ENCODE measurements at regions of chr18 and their contacts with region 1.

Region 1: DNA sequence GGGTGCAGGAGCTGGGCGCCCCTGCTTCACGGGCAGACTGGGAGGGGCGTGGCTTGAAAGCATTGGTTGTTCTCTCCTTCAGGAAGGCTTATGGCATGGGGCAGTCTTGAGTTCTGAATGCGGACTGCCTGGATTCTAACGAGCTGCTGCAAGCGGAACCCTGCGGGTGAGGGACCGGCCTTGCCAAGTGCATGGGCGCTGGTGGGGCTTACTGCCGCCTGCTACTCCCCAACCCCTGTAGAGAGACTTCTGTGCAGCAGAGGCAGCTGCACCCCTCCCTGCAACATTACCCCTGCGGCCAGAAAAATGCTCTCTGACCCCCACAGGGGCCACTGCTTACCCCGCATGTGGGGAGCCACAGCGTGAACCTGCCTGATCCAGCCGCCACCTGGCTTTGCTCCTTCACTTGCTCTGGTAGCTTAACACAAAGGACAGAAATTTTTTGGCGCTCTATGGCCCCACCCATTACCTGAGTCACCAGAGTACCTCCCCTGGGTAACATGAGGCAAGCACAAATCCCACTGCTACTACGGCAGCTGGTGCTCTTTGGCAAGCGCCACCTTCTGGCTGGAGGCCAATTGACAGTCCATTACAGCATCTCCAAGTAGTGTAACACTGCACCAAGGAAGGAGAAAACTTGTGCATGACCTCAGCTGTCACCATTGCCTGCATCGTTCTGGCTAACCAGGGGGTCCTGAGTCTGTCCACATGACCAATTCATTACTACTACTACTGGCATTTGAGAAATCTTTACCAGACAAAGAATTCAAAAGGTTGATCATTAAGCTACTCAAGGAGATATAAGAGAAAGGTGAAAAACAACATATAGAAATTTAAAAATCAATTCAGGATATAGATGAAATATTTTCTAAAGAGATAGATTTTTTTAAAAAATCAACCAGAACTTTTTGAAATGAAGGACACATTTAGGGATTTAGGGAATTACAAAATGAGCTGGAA is 35.4 kb downstream of the MYL12B start:
- DNase-seq: peak; percentile 93
- H3K4me3 ChIP-seq: peak overlapping the region; percentile 68 to 79 (median 68)
- H3K27ac ChIP-seq: peak overlapping the region; percentile 72
- H3K4me1 ChIP-seq: peaks cover 7% of the 10 kb centered on the region
- H3K27me3 ChIP-seq: no peaks in the 10 kb centered on the region
- CTCF ChIP-seq: peak; percentile 69 to 84

Region 2: GRCh38 chr18:3350566-3351527 is 53.5 kb after region 1 on chr18:
- CTCF ChIA-PET with region 1: no interaction called
- dilution Hi-C with region 1: no loop called
- in situ Hi-C with region 1: no loop called
- intact Hi-C with region 1: loop called (anchors 2 kb)
- DNase-seq: peak; percentile 98
- H3K4me3 ChIP-seq: no peak overlapping the region
- H3K27ac ChIP-seq: peak overlapping the region; percentile 94
- H3K4me1 ChIP-seq: peaks cover 29% of the 10 kb centered on the region
- H3K27me3 ChIP-seq: no peaks in the 10 kb centered on the region
- CTCF ChIP-seq: no peak

Region 3: GRCh38 chr18:3380384-3380961 is 83.2 kb after region 1 on chr18:
- CTCF ChIA-PET with region 1: no interaction called
- dilution Hi-C with region 1: no loop called
- in situ Hi-C with region 1: no loop called
- intact Hi-C with region 1: loop called (anchors 5 kb)
- DNase-seq: peak; percentile 82
- H3K4me3 ChIP-seq: no peak overlapping the region
- H3K27ac ChIP-seq: peak overlapping the region; percentile 51
- H3K4me1 ChIP-seq: peaks cover 11% of the 10 kb centered on the region
- H3K27me3 ChIP-seq: no peaks in the 10 kb centered on the region
- CTCF ChIP-seq: peak; percentile 36 to 42

Region 4: DNA sequence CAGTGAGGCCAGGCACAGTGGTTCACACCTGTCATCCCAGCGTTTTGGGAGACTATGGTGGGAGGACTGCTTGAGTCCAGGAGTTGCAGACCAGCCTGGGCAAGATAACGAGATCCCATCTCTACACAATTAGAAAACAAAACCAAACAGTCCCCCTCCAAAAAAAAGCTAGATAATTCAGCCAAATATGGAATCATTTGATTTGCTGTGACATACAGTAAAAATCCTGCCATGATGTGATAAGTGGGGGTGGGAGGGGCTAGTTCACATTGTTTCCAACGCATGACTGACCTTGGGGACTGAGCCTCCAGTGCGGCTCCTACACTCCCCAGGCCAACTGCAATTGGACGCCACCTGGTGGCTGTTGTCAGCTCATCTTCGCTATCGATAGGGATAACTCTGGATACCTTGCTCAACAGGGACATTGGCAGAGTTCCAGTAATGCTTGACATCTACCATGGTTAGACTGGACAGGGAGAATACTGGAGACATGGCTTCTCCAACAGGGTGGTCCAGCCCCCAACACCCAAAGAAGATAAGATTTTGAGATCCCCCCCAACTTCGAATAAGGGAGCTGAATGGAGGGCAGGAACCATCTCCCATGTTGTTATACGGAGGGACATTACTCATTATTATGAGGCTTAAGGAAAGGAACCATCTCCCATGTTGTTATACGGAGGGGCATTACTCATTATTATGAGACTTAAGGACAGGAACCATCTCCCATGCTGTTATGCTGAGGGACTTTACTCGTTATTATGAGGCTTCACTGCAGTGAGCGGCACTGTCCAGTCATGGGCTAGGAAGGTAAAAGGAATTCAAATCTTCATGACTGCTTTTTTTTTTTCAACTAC is 288.6 kb after region 1 on chr18:
- CTCF ChIA-PET with region 1: no interaction called
- dilution Hi-C with region 1: loop called (anchors 5 kb)
- in situ Hi-C with region 1: no loop called
- intact Hi-C with region 1: no loop called
- DNase-seq: peak; percentile 61
- H3K4me3 ChIP-seq: no peak overlapping the region
- H3K27ac ChIP-seq: no peak overlapping the region
- H3K4me1 ChIP-seq: peaks cover 9% of the 10 kb centered on the region
- H3K27me3 ChIP-seq: no peaks in the 10 kb centered on the region
- CTCF ChIP-seq: peak; percentile 86 to 90

Region 5: DNA sequence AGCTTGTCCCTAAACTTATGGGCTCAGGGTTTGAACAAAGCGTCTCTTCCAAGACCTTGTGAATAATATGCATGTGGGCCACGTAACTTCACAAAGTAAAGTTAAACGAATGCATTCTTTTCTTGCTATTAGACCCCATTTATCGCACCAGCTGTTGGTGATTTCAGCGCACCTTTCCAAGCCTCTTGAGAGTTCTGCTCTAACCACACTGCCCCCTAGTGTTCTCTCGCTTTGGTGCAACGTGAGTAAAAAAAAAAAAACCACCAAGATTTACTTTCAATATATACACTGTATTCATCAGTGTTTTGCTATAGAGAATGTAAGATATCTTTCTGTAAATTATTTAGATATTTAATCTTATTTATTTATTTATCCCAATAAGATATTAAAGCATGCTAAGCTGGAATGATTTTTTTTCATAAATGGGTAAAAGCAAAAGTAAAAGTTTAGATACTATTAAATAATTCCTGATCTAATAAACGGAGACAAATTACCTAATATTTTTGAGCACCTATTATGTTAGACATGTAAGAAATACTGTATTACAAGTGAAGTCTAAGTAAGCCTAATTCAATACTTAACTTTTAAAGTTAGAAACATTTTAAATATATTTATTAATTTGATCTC is 698.3 kb after region 1 on chr18:
- CTCF ChIA-PET with region 1: interaction called, 6 read pairs
- dilution Hi-C with region 1: loop called (anchors 25 kb)
- in situ Hi-C with region 1: loop called (anchors 25 kb)
- intact Hi-C with region 1: no loop called
- DNase-seq: peak; percentile 55
- H3K4me3 ChIP-seq: peak overlapping the region in 2 of 3 experiments; percentile 3 to 22
- H3K27ac ChIP-seq: no peak overlapping the region
- H3K4me1 ChIP-seq: peaks cover 5% of the 10 kb centered on the region
- H3K27me3 ChIP-seq: no peaks in the 10 kb centered on the region
- CTCF ChIP-seq: peak; percentile 87 to 92

Measured in mammary epithelial cell (primary cell).